Right ventricle myocardium inferior (tissue), 1 donor: ENCODE measurements at regions of chr11 and their contacts with region 1.

Region 1: GRCh38 chr11:2825889-2826678 is 59.5 kb downstream of the CDKN1C start:
- DNase-seq: peak; percentile 81
- ATAC-seq: peak; percentile 83

Region 2: DNA sequence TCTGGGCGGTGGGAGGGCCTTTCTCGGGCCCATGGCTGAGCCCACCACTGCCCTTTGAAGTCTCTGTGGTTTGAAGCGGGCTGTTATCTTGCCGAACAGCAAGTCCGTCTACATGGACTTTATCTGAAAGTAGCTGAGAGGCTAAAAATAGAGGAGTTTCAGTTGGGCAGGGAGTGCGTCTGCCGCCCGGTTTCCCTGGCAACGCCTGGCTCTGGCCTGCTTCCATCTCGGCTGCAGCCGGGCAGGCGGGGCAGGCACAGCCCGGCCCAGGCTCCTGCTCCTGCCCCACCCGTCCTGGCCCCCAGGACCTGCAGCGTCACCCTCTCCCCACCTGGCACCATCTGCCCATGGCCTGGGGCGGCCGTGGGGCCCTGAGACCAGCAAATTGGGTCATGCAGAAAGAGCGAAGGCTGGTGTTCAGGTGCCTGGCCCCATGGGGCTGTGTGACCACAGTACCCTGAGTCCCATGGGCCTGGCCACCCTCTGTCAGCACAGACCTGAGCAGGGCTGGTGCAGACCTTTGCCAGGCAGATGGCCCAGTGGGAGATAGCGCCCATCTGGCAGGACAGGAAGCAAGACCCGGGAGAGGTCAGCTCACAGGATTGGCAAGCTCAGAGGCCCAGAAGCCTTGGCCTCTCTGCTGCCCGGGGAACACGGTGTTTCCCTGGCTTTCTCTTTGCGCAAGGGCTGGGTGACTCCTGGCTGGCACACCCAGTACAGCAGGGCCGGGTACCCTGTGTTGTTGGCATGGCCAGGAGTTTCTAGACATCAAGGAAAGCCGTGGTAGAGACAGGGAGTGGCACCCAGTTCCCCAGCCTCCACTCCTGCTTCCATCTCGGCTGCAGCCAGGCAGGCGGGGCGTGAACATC is 47.2 kb before region 1 on chr11:
- intact Hi-C with region 1: no loop called
- DNase-seq: peak; percentile 89
- ATAC-seq: peak; percentile 89

Region 3: GRCh38 chr11:2812371-2812991 is 13.6 kb before region 1 on chr11:
- intact Hi-C with region 1: loop called (anchors 2 kb)
- DNase-seq: peak; percentile 88
- ATAC-seq: peak; percentile 77

Region 4: GRCh38 chr11:2846056-2846455 is 20.0 kb after region 1 on chr11:
- intact Hi-C with region 1: no loop called
- DNase-seq: no peak
- ATAC-seq: no peak

Region 5: DNA sequence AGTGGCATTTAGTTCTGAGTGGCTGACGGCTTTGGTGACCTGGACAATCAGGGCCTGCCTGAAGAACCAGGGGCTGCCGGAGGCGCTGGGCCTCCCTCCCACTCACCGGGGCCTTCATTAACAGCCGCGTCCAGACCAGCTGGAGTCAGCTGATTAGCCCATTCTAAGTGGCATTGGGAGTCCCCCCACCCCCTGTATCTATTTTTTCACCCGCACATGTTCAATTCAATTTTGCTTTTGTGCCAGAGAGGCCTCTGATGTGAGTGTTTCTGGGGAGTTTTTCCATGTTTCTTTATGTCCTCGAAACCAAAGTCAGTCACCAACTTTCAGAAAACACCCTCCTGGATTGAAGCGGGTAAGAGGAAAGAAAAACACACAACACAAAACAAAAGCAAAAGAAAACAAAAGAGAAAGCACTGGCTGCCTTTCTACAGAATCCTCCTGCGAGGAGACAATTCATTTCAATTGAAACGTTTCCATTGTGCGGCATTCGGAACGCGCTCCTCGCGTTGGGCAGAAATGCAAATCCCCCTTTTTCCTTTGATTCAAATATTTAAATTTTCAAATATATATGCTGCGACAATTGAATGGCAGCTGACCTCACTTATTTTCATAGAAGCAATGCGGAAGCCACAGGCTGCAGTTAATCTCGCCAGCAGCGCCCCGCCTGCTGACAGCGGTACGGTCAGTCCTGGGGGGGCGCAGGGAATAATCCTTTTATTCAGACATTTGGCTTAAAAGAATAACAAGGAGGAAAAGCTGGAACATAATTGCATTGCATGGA is 41.8 kb after region 1 on chr11:
- intact Hi-C with region 1: loop called (anchors 2 kb)
- DNase-seq: no peak
- ATAC-seq: no peak